ENCODE measurements at regions of chr3 and their contacts with region 1.

Region 1: DNA sequence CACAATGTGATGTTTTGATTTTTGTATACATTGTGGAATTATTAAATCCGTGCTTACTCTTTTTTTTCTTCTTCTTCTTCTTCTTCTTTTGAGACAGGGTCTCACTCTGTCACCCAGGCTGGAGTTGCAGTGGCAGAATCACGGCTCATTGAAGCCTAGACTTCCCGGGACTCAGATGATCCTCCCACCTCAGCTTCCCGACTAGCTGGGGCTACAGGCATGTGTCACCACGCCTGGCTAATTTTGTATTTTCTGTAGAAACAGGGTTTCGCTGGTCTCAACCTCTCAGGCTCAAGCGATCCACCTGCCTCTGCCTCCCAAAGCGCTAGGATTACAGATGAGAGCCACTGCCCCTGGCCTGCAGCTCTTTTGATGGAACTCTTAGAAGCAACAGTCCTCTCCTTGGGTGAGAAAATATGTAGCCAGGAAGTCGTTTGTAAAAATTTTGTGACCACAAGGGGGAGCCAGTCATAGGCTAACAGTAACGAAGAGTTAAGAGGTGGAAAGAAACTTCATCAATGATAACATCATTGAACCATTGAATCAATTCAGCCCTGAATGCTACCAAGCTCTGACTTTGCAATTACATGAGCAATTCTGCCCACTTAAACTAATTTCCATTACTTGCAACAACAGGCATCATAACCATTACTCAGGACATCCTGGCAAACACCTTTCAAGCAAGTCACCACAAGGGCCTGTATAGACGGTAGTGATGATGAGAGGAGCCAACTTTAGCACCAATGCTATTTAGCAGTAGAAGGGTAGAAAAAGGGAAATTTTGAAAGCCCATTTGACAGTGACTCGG is 16.7 kb upstream of the CMTM7 start:
- DNase-seq: peak; percentile 42
- ATAC-seq: peak; percentile 92
- H3K4me3 ChIP-seq: no peak overlapping the region
- H3K27ac ChIP-seq: no peak overlapping the region
- H3K4me1 ChIP-seq: peaks cover 4% of the 10 kb centered on the region; the same call in 1 of the 2 replicates
- H3K27me3 ChIP-seq: peaks cover 0 to 3% of the 10 kb centered on the region in 2 experiments; a peak in 1 of 4 replicates
- CTCF ChIP-seq: peak; percentile 55 to 60 (median 59); a peak in 5 of 6 replicates
- EP300 ChIP-seq: no peak
- POLR2A ChIP-seq: no peak
- RAD21 ChIP-seq: peak; percentile 75

Region 2: GRCh38 chr3:31687020-31687802 is 687.8 kb before region 1 on chr3:
- CTCF ChIA-PET with region 1: no interaction called
- POLR2A ChIA-PET with region 1: no interaction called
- RAD21 ChIA-PET with region 1: no interaction called
- SMC1A ChIA-PET with region 1: no interaction called
- in situ Hi-C with region 1: no loop called
- intact Hi-C with region 1: no loop called
- DNase-seq: no peak
- ATAC-seq: no peak
- H3K4me3 ChIP-seq: no peak overlapping the region
- H3K27ac ChIP-seq: no peak overlapping the region
- H3K4me1 ChIP-seq: no peaks in the 10 kb centered on the region
- H3K27me3 ChIP-seq: no peaks in the 10 kb centered on the region
- CTCF ChIP-seq: peak in 1 of 3 experiments; percentile 10; a peak in 1 of 6 replicates
- EP300 ChIP-seq: no peak
- POLR2A ChIP-seq: no peak
- RAD21 ChIP-seq: no peak

Region 3: DNA sequence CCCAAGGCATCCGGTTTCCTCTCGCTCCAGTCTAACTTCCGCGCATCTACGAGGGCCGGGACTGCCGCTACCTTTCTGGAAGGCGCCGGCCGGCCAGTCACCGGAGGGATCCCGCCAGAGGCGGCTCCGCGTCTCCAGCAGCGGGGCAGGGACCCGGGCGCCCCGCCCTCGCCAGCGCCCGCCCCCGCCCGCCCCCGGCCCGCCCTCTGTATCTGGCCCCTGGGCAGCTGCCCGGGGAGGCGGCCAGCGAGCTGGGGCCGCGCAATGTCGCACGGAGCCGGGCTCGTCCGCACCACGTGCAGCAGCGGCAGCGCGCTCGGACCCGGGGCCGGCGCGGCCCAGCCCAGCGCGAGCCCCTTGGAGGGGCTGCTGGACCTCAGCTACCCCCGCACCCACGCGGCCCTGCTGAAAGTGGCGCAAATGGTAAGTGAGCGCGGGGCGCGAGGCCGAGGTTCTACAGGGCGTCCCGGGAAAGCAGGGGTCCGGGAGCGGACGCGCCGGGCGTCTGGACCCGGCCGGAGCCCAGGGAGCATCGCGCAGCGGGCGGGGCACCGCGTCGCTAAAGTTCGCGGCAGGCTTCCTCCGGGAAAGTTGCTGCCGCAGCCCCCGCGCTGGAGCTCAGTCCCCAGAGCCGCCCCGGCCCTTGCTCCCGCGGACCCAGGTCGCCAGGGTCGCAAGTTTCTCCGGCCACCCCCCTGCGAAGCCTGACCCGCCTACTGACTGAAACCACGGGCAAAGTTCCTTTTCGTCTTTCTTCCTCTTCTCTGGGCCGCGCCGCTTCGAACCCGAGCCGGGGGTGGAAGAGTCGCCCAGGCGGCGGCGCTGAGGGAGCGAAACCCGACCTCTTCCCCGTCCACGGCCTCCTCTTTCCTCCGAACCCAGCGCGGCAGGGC is 16.9 kb after region 1 on chr3 and contains the start of gene CMTM7:
- CTCF ChIA-PET with region 1: interaction called, 102 read pairs
- POLR2A ChIA-PET with region 1: interaction called, 3 read pairs
- RAD21 ChIA-PET with region 1: interaction called, 24 read pairs
- SMC1A ChIA-PET with region 1: interaction called, 78 read pairs
- in situ Hi-C with region 1: no loop called
- intact Hi-C with region 1: no loop called
- DNase-seq: no peak
- ATAC-seq: peak; percentile 79
- H3K4me3 ChIP-seq: peak within 1 kb of the TSS; percentile 68
- H3K27ac ChIP-seq: no peak within 1 kb of the TSS
- H3K4me1 ChIP-seq: peaks cover 4% of the 10 kb centered on the region
- H3K27me3 ChIP-seq: peaks cover 0 to 4% of the 10 kb centered on the region in 2 experiments; a peak in 2 of 4 replicates
- CTCF ChIP-seq: no peak
- EP300 ChIP-seq: no peak
- POLR2A ChIP-seq: no peak
- RAD21 ChIP-seq: no peak
- polyA plus RNA-seq, gene CMTM7: 3.7 to 12.0 TPM

Region 4: GRCh38 chr3:32406486-32407408 is 31.8 kb after region 1 on chr3:
- CTCF ChIA-PET with region 1: interaction called, 21 read pairs
- POLR2A ChIA-PET with region 1: no interaction called
- RAD21 ChIA-PET with region 1: interaction called, 3 read pairs
- SMC1A ChIA-PET with region 1: interaction called, 6 read pairs
- in situ Hi-C with region 1: no loop called
- intact Hi-C with region 1: no loop called
- DNase-seq: no peak
- ATAC-seq: no peak
- H3K4me3 ChIP-seq: no peak overlapping the region
- H3K27ac ChIP-seq: no peak overlapping the region
- H3K4me1 ChIP-seq: no peaks in the 10 kb centered on the region; the same call in 1 of the 2 replicates
- H3K27me3 ChIP-seq: no peaks in the 10 kb centered on the region
- CTCF ChIP-seq: no peak
- EP300 ChIP-seq: no peak
- POLR2A ChIP-seq: no peak
- RAD21 ChIP-seq: no peak

Region 5: GRCh38 chr3:32428092-32429068 is 53.4 kb after region 1 on chr3:
- CTCF ChIA-PET with region 1: interaction called, 22 read pairs
- POLR2A ChIA-PET with region 1: no interaction called
- RAD21 ChIA-PET with region 1: interaction called, 14 read pairs
- SMC1A ChIA-PET with region 1: interaction called, 26 read pairs
- in situ Hi-C with region 1: no loop called
- intact Hi-C with region 1: no loop called
- DNase-seq: no peak
- ATAC-seq: peak; percentile 81
- H3K4me3 ChIP-seq: no peak overlapping the region
- H3K27ac ChIP-seq: no peak overlapping the region
- H3K4me1 ChIP-seq: peaks cover 39% of the 10 kb centered on the region
- H3K27me3 ChIP-seq: no peaks in the 10 kb centered on the region; a peak in 1 of 4 replicates
- CTCF ChIP-seq: no peak
- EP300 ChIP-seq: peak; percentile 71 to 83; a peak in 2 of 4 replicates
- POLR2A ChIP-seq: no peak
- RAD21 ChIP-seq: no peak

Region 6: DNA sequence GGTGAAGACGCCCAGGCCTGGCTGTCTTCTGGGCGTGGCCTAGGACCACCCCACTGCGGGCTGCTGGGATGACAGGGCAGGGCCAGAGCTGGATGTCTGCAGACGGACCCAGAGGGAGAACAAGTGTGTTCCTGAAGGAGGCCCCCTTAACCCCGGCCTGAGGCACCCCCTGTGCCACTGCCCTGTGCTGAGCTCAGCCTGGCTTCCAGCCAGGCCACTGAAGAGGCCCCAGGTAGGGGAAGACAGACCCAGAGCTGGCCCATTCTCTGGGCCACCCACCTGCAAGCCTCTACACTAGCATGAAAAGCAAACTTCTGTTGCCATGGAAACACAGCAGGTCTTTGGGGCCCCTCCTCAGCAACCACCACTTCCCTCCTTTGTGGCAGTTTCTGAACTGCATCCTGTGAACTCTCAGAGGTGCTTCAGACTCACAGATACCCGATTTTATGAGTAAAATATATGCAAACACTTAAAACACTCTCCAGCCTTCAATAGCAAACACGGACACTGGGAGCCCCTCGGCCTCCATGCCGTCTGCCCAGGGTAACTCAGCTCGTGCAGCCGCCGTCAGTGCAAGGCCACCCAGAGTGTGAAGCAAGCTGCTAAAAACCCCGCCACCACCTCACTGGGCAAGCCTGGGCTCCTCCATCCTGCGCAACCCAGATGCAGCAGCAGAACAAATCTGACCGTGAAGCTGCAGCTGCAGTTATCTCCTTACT is 85.2 kb after region 1 on chr3:
- CTCF ChIA-PET with region 1: interaction called, 18 read pairs
- POLR2A ChIA-PET with region 1: interaction called, 3 read pairs
- RAD21 ChIA-PET with region 1: interaction called, 8 read pairs
- SMC1A ChIA-PET with region 1: interaction called, 11 read pairs
- in situ Hi-C with region 1: loop called (anchors 5 kb)
- intact Hi-C with region 1: no loop called
- DNase-seq: no peak
- ATAC-seq: peak; percentile 76
- H3K4me3 ChIP-seq: peak overlapping the region; percentile 30; the same call in 1 of the 2 replicates
- H3K27ac ChIP-seq: no peak overlapping the region
- H3K4me1 ChIP-seq: peaks cover 36% of the 10 kb centered on the region
- H3K27me3 ChIP-seq: no peaks in the 10 kb centered on the region
- CTCF ChIP-seq: no peak
- EP300 ChIP-seq: no peak
- POLR2A ChIP-seq: no peak
- RAD21 ChIP-seq: no peak

Region 7: DNA sequence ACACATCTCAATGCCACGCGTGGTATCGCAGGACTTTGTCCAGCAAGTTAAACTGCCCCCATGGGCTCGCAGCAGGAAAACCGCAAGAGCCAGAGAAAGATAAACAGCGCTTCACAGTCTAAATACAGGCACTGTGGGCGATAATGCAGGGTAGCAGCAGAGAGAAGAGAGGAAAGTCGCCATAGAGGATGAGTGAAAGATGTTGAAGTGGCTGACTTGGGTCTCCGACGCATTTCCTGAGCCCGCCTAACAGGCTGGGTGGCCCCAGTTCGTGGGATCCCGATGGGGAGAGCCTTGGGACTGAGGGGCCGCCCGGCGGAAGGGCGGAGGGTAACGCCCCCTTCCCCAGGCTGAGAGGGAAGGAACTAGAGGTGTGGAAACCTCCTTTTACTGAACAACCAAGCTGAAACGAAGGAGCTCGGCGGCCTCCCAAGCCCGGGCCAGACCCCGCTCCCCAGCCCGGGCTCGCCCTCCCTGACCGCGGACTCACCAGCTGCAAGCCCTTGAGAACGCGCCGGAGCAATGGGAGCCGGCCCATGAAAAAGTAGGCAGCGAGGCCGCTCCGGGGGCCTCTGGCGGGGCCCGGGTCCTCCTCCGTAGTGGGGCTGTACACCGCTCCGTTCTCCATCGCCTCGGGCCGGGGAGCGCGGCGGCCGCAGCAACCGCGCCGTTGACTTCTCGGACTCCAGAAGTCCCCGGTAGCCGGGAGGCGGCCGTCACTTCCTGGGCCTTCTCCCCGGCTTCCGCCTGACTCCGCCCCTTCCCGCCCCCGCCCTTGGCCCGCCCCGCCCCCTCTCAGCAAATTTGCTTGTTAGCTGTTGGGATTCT is 127.3 kb after region 1 on chr3 and contains the start of gene CMTM6:
- CTCF ChIA-PET with region 1: interaction called, 12 read pairs
- POLR2A ChIA-PET with region 1: interaction called, 4 read pairs
- RAD21 ChIA-PET with region 1: interaction called, 7 read pairs
- SMC1A ChIA-PET with region 1: interaction called, 10 read pairs
- in situ Hi-C with region 1: no loop called
- intact Hi-C with region 1: no loop called
- DNase-seq: no peak
- ATAC-seq: peak; percentile 85
- H3K4me3 ChIP-seq: peak within 1 kb of the TSS; percentile 88
- H3K27ac ChIP-seq: peak within 1 kb of the TSS; percentile 78
- H3K4me1 ChIP-seq: peaks cover 4% of the 10 kb centered on the region; the same call in 1 of the 2 replicates
- H3K27me3 ChIP-seq: no peaks in the 10 kb centered on the region
- CTCF ChIP-seq: no peak
- EP300 ChIP-seq: no peak
- POLR2A ChIP-seq: peak; percentile 86
- RAD21 ChIP-seq: 0 out of 2 replicates have a peak, but pooled peaks have one; percentile 6
- polyA plus RNA-seq, gene CMTM6: 27.1 to 39.0 TPM

Region 8: DNA sequence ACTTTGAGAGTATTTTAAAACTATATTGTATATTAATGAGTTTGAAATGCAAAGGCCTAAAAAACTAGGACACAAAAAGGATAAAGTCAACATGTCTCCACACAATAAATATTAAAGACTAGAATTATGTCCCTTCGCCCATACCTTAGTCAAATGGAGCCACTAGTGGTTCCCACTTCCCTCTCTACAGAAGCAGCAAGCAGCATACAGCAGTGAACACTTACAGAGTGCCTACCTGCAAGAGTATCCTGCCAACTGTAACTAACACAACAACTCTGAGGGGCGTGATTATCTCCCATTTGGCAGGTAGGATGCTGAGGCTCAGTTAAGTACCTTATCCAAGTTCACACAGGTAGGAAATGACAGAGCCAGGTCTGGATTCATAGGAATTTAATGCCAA is 178.5 kb after region 1 on chr3:
- CTCF ChIA-PET with region 1: no interaction called
- POLR2A ChIA-PET with region 1: no interaction called
- RAD21 ChIA-PET with region 1: no interaction called
- SMC1A ChIA-PET with region 1: no interaction called
- in situ Hi-C with region 1: no loop called
- intact Hi-C with region 1: no loop called
- DNase-seq: no peak
- ATAC-seq: peak; percentile 74
- H3K4me3 ChIP-seq: no peak overlapping the region
- H3K27ac ChIP-seq: no peak overlapping the region
- H3K4me1 ChIP-seq: peaks cover 37% of the 10 kb centered on the region
- H3K27me3 ChIP-seq: no peaks in the 10 kb centered on the region
- CTCF ChIP-seq: no peak
- EP300 ChIP-seq: no peak
- POLR2A ChIP-seq: no peak
- RAD21 ChIP-seq: no peak

Region 9: DNA sequence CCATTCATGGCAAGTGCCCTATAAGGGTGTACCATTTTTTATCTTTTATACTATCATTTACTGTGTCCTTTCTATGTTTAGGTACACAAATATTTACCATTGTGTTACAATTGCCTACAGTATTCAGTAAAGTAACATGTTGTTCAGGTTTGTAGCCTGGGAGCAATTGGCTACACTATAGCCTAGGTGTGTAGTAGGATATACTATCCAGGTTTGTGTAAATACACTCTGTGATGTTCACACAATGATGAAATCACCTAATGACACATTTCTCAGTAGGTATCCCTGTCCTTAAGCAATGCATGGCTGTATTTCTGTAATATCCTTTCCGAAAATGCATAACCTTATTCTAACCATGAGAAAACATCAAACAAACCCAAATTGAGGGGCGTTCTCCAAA is 292.1 kb after region 1 on chr3:
- CTCF ChIA-PET with region 1: interaction called, 3 read pairs
- POLR2A ChIA-PET with region 1: no interaction called
- RAD21 ChIA-PET with region 1: interaction called, 4 read pairs
- SMC1A ChIA-PET with region 1: no interaction called
- in situ Hi-C with region 1: loop called (anchors 10 kb)
- intact Hi-C with region 1: loop called (anchors 10 kb)
- DNase-seq: no peak
- ATAC-seq: no peak
- H3K4me3 ChIP-seq: no peak overlapping the region
- H3K27ac ChIP-seq: no peak overlapping the region
- H3K4me1 ChIP-seq: no peaks in the 10 kb centered on the region
- H3K27me3 ChIP-seq: peaks cover 0 to 2% of the 10 kb centered on the region in 2 experiments; a peak in 2 of 4 replicates
- CTCF ChIP-seq: no peak
- EP300 ChIP-seq: no peak
- POLR2A ChIP-seq: no peak
- RAD21 ChIP-seq: no peak